ENCODE measurements at regions of chr10 and their contacts with region 1.

Region 1: DNA sequence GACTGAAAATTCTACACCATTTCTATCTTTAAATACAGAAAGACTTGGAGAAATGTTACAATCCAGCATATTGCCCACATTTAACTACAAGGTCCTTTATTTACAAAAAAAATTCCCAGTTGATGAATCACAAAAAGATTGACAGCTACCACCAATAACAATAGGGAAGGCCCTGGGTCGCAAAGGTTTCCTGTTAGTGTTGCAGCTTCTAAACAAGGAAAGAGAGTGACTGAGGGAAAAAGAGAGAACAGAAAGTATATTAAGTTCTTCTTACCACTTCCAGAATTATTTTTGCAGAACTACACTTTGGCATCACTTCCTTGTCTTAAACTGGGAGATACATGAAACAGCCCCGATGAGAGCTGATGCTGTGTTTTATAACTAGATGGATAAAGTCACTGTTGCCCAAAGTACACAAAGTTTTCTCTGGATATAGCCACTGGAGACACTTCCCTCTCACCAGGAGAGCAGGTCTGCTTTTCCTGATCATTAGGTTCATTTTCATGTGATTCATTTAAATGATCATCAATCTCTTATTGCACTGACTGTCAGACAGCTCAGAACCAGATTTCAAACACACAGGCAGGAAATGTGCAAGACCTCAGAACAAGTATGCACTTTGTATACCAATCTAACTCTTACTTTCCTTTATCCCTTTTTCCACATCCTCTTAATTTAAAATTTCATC is 57.0 kb downstream of the SHTN1 start:
- DNase-seq: peak; percentile 88
- H3K4me3 ChIP-seq: peak overlapping the region in 2 of 3 experiments; percentile 6 to 8
- H3K27ac ChIP-seq: peak overlapping the region; percentile 88
- H3K4me1 ChIP-seq: peaks cover 23% of the 10 kb centered on the region
- H3K27me3 ChIP-seq: no peaks in the 10 kb centered on the region
- CTCF ChIP-seq: no peak
- POLR2A ChIP-seq: no peak

Region 2: GRCh38 chr10:116526219-116526618 is 421.8 kb before region 1 on chr10:
- CTCF ChIA-PET with region 1: no interaction called
- POLR2A ChIA-PET with region 1: no interaction called
- dilution Hi-C with region 1: no loop called
- intact Hi-C with region 1: no loop called
- DNase-seq: no peak
- H3K4me3 ChIP-seq: no peak overlapping the region
- H3K27ac ChIP-seq: no peak overlapping the region
- H3K4me1 ChIP-seq: no peaks in the 10 kb centered on the region
- H3K27me3 ChIP-seq: no peaks in the 10 kb centered on the region
- CTCF ChIP-seq: no peak
- POLR2A ChIP-seq: no peak

Region 3: GRCh38 chr10:116849248-116850057 is 98.5 kb before region 1 on chr10 and contains the start of gene ENO4:
- CTCF ChIA-PET with region 1: interaction called, 3 read pairs
- POLR2A ChIA-PET with region 1: no interaction called
- dilution Hi-C with region 1: no loop called
- intact Hi-C with region 1: loop called (anchors 5 kb)
- DNase-seq: peak; percentile 89
- H3K4me3 ChIP-seq: peak within 1 kb of the TSS; percentile 8 to 64 (median 37)
- H3K27ac ChIP-seq: no peak within 1 kb of the TSS
- H3K4me1 ChIP-seq: peaks cover 2% of the 10 kb centered on the region
- H3K27me3 ChIP-seq: peaks cover 17 to 18% of the 10 kb centered on the region in 2 experiments
- CTCF ChIP-seq: no peak
- POLR2A ChIP-seq: no peak
- total RNA-seq, gene ENO4: not detected in 2 replicates

Region 4: DNA sequence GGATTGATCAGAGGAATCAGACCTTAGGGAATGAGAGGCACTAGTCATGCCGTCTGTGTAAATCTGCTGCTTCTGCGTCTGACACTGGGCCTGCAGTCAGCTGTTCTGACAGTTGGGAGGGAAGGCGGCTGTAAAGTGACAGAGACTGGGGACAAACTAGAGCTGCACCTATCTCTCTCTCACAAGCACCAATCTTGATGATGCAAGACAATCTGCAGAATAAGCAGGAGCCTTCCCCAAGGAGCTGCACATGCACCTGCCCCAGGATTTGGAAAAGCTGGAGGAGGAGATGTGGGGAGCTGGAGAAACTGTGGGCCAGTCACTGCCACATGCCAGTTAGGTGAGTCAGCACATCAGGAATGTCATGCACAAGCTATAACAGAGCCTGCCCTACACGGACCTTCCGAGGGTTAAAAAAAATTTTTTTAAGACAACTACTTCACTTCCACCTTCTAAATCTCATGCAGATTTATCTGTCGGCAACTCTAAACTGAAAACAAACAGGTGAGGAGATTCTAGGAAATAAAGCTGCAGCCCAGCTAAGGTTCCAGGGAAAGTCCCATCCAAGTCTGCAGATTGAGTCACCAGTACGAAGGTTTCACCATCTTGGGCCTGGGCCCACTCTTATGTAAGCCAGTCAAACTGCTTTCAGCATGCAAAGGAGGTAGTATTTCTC is 59.5 kb before region 1 on chr10:
- CTCF ChIA-PET with region 1: interaction called, 5 read pairs
- POLR2A ChIA-PET with region 1: no interaction called
- dilution Hi-C with region 1: no loop called
- intact Hi-C with region 1: loop called (anchors 1 kb)
- DNase-seq: peak; percentile 65
- H3K4me3 ChIP-seq: no peak overlapping the region
- H3K27ac ChIP-seq: peak overlapping the region; percentile 23
- H3K4me1 ChIP-seq: peaks cover 38% of the 10 kb centered on the region
- H3K27me3 ChIP-seq: no peaks in the 10 kb centered on the region
- CTCF ChIP-seq: no peak
- POLR2A ChIP-seq: no peak

Region 5: GRCh38 chr10:116974473-116975005 is 26.6 kb after region 1 on chr10:
- CTCF ChIA-PET with region 1: interaction called, 20 read pairs
- POLR2A ChIA-PET with region 1: no interaction called
- dilution Hi-C with region 1: no loop called
- intact Hi-C with region 1: loop called (anchors 1 kb)
- DNase-seq: peak; percentile 94
- H3K4me3 ChIP-seq: peak overlapping the region in 2 of 3 experiments; percentile 40 to 54
- H3K27ac ChIP-seq: peak overlapping the region; percentile 63
- H3K4me1 ChIP-seq: peaks cover 20% of the 10 kb centered on the region
- H3K27me3 ChIP-seq: no peaks in the 10 kb centered on the region
- CTCF ChIP-seq: no peak
- POLR2A ChIP-seq: no peak

Region 6: DNA sequence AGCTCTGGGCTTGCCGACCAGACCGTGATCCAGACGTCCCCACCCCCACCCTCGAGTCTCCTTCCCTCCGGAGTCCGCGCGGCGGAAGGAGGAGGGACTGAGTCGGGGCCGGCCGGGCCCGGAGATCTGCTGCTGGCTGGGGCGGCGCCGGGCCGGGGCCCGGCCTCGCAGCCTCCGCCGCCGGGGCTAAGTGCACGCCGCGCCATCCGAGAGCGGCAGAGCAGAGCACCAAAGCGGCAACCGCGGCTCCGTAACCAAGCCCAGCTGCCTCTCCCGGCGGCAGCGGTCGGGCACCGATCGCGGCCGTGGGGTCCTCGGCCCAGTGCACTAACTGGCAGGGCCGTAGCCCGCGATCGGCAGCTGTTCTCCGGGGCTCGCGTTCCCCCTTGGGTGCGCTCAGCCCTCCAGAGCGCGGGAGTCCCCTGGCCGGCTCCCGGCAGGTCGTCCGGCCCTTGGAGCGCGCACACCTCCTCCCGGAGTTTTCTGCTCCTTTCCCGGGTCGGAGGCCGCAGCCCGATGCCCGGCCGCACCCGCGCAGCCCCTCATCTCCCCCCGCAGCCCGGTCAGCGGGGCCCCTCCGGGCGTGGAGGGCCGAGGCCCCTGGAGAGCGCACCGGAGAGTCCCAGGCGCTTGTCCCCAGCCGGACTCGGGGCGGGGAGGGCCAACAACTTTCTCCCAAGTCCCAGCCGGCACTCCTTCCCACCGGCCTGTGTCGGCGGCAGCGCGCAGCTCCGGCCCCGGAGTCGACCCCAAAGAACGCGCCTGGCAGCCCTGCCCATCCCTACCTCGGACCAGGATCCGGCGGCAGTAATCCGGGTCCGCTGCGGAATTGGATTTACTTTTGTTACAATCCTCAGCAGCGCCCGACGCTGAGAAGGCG is 189.3 kb after region 1 on chr10:
- CTCF ChIA-PET with region 1: no interaction called
- POLR2A ChIA-PET with region 1: no interaction called
- dilution Hi-C with region 1: no loop called
- intact Hi-C with region 1: loop called (anchors 5 kb)
- DNase-seq: peak; percentile 22
- H3K4me3 ChIP-seq: peak overlapping the region in 2 of 3 experiments; percentile 15 to 26
- H3K27ac ChIP-seq: no peak overlapping the region
- H3K4me1 ChIP-seq: peaks cover 10% of the 10 kb centered on the region
- H3K27me3 ChIP-seq: peaks cover 73 to 94% of the 10 kb centered on the region in 2 experiments
- CTCF ChIP-seq: no peak
- POLR2A ChIP-seq: no peak

Measured in endothelial cell of umbilical vein (primary cell).